Heart left ventricle (tissue), 16 donors: ENCODE measurements at regions of chr15 and their contacts with region 1.

Region 1: GRCh38 chr15:85865070-85865684 is 70.5 kb upstream of the KLHL25 start:
- DNase-seq: no peak
- ATAC-seq: peak in 3 of 4 donors; percentile 50 to 63 (median 57)
- H3K4me3 ChIP-seq: no peak overlapping the region
- H3K27ac ChIP-seq: no peak overlapping the region
- H3K4me1 ChIP-seq: peaks cover 0 to 3% (median 0%) of the 10 kb centered on the region in 12 donors
- H3K27me3 ChIP-seq: peaks cover 0 to 23% (median 2%) of the 10 kb centered on the region in 9 donors
- CTCF ChIP-seq: peak; percentile 18 to 65 (median 54)
- POLR2A ChIP-seq: no peak

Region 2: GRCh38 chr15:85750319-85750806 is 114.8 kb before region 1 on chr15:
- intact Hi-C with region 1: no loop called
- DNase-seq: peak; percentile 75 to 89 (median 85)
- ATAC-seq: peak; percentile 50 to 78 (median 68)
- H3K4me3 ChIP-seq: peak overlapping the region in 7 of 12 donors; percentile 4 to 45 (median 23)
- H3K27ac ChIP-seq: peak overlapping the region; percentile 65 to 90 (median 76)
- H3K4me1 ChIP-seq: peaks cover 4 to 77% (median 42%) of the 10 kb centered on the region in 12 donors
- H3K27me3 ChIP-seq: no peaks in the 10 kb centered on the region
- CTCF ChIP-seq: no peak
- POLR2A ChIP-seq: no peak

Region 3: DNA sequence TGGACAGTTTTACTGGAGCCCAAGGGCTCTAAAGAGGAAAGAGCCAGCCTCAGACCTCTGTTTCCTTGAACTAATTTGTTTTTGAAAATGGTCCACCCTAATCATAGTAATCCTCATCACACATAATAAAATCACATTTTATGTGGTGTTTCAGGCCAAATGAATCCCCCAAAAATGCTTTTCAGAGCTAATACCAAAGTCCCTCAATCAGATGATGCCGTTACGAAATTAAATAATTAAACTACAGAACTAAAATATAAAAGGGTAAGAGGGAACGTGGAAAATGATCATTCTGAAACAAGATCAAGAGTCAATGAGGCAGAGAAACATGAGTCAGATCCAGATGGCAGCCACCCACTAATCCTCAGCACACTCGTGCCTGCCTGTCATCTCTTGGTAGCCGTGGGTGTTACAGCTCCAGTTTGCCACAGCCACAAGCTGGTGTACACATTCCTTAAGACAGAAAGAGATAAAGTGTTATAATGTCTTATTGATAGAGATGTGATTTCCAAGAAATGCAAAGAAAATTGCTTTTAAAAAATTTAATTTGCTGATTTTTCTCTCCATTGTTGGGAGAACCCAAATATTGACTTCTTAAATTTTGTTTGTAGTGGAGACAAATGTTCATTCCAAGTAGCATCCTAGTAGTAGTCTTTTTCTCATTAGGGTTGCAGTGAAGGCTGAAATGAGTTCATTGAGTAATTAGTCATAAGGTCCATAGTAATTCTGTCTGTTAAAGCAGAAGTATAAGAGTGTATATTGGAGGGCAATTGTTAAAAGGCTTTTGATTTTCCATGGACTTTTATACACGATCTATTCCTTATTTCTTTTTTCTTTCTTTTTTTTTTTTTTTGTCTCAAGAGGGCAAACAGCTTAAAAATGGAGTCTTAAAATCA is 318.7 kb after region 1 on chr15:
- intact Hi-C with region 1: loop called in 1 of 10 experiments (anchors 10 kb)
- DNase-seq: no peak
- ATAC-seq: no peak
- H3K4me3 ChIP-seq: no peak overlapping the region
- H3K27ac ChIP-seq: no peak overlapping the region
- H3K4me1 ChIP-seq: no peaks in the 10 kb centered on the region
- H3K27me3 ChIP-seq: no peaks in the 10 kb centered on the region
- CTCF ChIP-seq: no peak
- POLR2A ChIP-seq: no peak